Heart left ventricle (tissue), 16 donors: ENCODE measurements at regions of chr10 and their contacts with region 1.

Region 1: GRCh38 chr10:97596101-97597062 is 6.9 kb downstream of the C10orf62 start:
- DNase-seq: peak in 3 of 5 donors; percentile 64 to 79 (median 69)
- ATAC-seq: peak; percentile 92 to 96 (median 93)
- H3K4me3 ChIP-seq: no peak overlapping the region
- H3K27ac ChIP-seq: peak overlapping the region; percentile 81 to 99 (median 92)
- H3K4me1 ChIP-seq: peaks cover 0 to 64% (median 23%) of the 10 kb centered on the region in 12 donors
- H3K27me3 ChIP-seq: no peaks in the 10 kb centered on the region
- CTCF ChIP-seq: no peak
- POLR2A ChIP-seq: peak in 1 of 2 donors; percentile 60

Region 2: GRCh38 chr10:97572214-97572989 is 24.0 kb before region 1 on chr10 and contains the start of gene ANKRD2:
- intact Hi-C with region 1: loop called in 1 of 10 experiments (anchors 2 kb)
- DNase-seq: peak; percentile 82 to 92 (median 87)
- ATAC-seq: peak; percentile 64 to 76 (median 72)
- H3K4me3 ChIP-seq: peak within 1 kb of the TSS in 9 of 12 donors; percentile 13 to 43 (median 36)
- H3K27ac ChIP-seq: peak within 1 kb of the TSS; percentile 71 to 95 (median 88)
- H3K4me1 ChIP-seq: peaks cover 0 to 50% (median 24%) of the 10 kb centered on the region in 12 donors
- H3K27me3 ChIP-seq: no peaks in the 10 kb centered on the region
- CTCF ChIP-seq: peak; percentile 69 to 85 (median 80)
- POLR2A ChIP-seq: no peak
- total RNA-seq, gene ANKRD2: 56.7 to 2,367 (median 517) TPM

Region 3: GRCh38 chr10:97584798-97585437 is 11.5 kb before region 1 on chr10:
- intact Hi-C with region 1: loop called in 1 of 10 experiments (anchors 1 kb)
- DNase-seq: peak in 1 of 5 donors; percentile 56
- ATAC-seq: peak; percentile 41 to 63 (median 56)
- H3K4me3 ChIP-seq: peak overlapping the region in 2 of 12 donors; percentile 3 to 15
- H3K27ac ChIP-seq: peak overlapping the region; percentile 67 to 96 (median 84)
- H3K4me1 ChIP-seq: peaks cover 0 to 43% (median 4%) of the 10 kb centered on the region in 12 donors
- H3K27me3 ChIP-seq: no peaks in the 10 kb centered on the region
- CTCF ChIP-seq: no peak
- POLR2A ChIP-seq: no peak